ENCODE measurements at regions of chr11 and their contacts with region 1.

Region 1: GRCh38 chr11:117658809-117659208 is 138.2 kb downstream of the DSCAML1 start:
- DNase-seq: no peak
- ATAC-seq: no peak
- H3K4me3 Mint-ChIP-seq: no peak overlapping the region
- H3K27ac Mint-ChIP-seq: no peak overlapping the region
- H3K4me1 Mint-ChIP-seq: peaks cover 14% of the 10 kb centered on the region
- H3K27me3 Mint-ChIP-seq: no peaks in the 10 kb centered on the region
- CTCF ChIP-seq: no peak

Region 2: DNA sequence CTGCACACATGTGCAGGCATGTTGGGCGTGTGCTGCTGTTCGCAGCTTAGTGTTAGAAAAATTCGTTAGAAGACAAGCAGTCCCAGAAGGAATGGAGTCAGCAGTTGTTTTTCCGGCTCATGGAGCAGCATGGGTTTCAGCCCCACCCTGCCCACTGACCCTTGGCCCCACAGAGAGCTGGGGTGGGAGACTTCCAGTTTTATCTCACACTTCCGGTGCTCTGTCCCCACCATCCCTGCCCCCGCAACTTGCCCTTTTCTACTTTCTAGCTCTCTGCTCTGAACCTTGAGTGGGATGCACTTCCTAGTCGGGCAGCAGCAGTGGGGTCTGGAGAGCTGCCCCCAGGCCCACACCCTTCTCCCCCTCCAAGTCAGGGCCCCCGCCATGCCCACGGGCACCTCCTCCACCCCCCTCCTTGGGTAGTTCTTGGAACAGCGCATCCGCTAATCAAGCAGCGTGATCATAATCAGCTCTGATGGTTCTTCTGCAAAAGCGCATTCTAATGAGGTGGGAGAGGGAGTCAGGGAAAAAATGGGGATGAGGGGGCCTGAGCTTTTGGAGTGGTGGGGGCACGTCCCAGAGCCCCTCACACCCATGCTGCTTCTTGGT is 146.8 kb before region 1 on chr11:
- CTCF ChIA-PET with region 1: no interaction called
- POLR2A ChIA-PET with region 1: no interaction called
- DNase-seq: no peak
- ATAC-seq: no peak
- H3K4me3 Mint-ChIP-seq: no peak overlapping the region
- H3K27ac Mint-ChIP-seq: peak overlapping the region; percentile 91
- H3K4me1 Mint-ChIP-seq: peaks cover 37% of the 10 kb centered on the region
- H3K27me3 Mint-ChIP-seq: no peaks in the 10 kb centered on the region
- CTCF ChIP-seq: no peak

Region 3: DNA sequence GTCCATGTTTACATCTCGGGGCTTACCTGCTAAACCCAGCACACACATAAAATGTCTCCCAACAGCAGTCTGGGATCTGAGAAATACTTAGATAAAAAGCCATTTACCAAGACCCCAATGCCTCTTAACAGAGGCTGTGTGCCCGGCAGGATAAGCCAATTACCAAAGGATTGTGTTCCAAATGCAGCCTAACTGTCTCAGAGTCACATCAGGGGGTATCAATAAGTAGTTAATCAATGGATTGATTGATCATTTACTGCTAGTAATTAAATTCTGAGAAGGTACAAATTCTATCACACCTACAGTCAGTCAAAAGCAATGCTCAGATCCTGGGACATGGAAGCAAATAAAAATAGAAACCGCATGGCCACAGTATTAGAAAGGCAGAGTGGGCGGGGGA is 12.6 kb after region 1 on chr11:
- CTCF ChIA-PET with region 1: no interaction called
- POLR2A ChIA-PET with region 1: interaction called, 13 read pairs
- DNase-seq: no peak
- ATAC-seq: no peak
- H3K4me3 Mint-ChIP-seq: no peak overlapping the region; the same call in 1 of the 2 replicates
- H3K27ac Mint-ChIP-seq: peak overlapping the region; percentile 64; the same call in 1 of the 2 replicates
- H3K4me1 Mint-ChIP-seq: peaks cover 45% of the 10 kb centered on the region
- H3K27me3 Mint-ChIP-seq: peaks cover 10% of the 10 kb centered on the region
- CTCF ChIP-seq: no peak

Region 4: GRCh38 chr11:117684731-117685130 is 25.9 kb after region 1 on chr11:
- CTCF ChIA-PET with region 1: no interaction called
- POLR2A ChIA-PET with region 1: no interaction called
- DNase-seq: no peak
- ATAC-seq: no peak
- H3K4me3 Mint-ChIP-seq: no peak overlapping the region
- H3K27ac Mint-ChIP-seq: no peak overlapping the region
- H3K4me1 Mint-ChIP-seq: peaks cover 37% of the 10 kb centered on the region
- H3K27me3 Mint-ChIP-seq: peaks cover 4% of the 10 kb centered on the region
- CTCF ChIP-seq: no peak